B cell (primary cell): ENCODE measurements at regions of chr16 and their contacts with region 1.

Region 1: GRCh38 chr16:85305996-85306792 is 193.9 kb upstream of the CIBAR2 start:
- DNase-seq: peak; percentile 91
- ATAC-seq: peak; percentile 71
- H3K4me3 ChIP-seq: peak overlapping the region in 1 of 5 experiments; percentile 22
- H3K4me3 Mint-ChIP-seq: peak overlapping the region; percentile 61
- H3K27ac ChIP-seq: peak overlapping the region; percentile 51
- H3K27ac Mint-ChIP-seq: peak overlapping the region; percentile 91
- H3K4me1 ChIP-seq: peaks cover 77 to 84% of the 10 kb centered on the region in 2 donors
- H3K4me1 Mint-ChIP-seq: peaks cover 59% of the 10 kb centered on the region
- H3K27me3 ChIP-seq: peaks cover 0 to 5% (median 0%) of the 10 kb centered on the region in 4 experiments
- H3K27me3 Mint-ChIP-seq: no peaks in the 10 kb centered on the region
- CTCF ChIP-seq: no peak

Region 2: DNA sequence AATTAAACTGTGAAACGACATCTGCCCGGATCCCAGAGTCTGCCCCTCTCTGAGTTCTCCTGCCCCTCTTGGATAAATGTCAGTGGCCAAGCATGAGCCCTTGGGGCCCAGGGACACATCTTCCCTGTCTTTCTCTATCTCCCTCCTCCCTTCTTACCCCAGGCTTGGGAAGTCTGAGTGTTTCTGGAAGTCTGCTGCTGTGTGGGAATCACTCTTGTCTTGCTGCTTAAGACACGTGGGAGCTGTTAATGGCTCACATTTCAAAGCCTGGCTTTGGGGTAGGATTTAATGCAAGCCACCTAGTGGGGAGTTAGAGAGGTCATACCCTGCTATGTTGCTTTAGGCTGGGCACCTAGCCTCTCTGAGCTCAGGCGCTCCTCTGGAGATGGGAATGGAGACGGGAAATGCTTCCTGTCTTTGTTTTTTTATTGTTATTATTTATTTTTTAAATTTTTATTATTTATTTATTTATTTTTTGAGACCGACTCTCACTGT is 24.5 kb after region 1 on chr16:
- CTCF ChIA-PET with region 1: interaction called, 39 read pairs
- POLR2A ChIA-PET with region 1: no interaction called
- intact Hi-C with region 1: loop called (anchors 1 kb)
- DNase-seq: peak; percentile 65
- ATAC-seq: peak; percentile 56
- H3K4me3 ChIP-seq: no peak overlapping the region
- H3K4me3 Mint-ChIP-seq: no peak overlapping the region
- H3K27ac ChIP-seq: no peak overlapping the region
- H3K27ac Mint-ChIP-seq: peak overlapping the region; percentile 3
- H3K4me1 ChIP-seq: peaks cover 33 to 43% of the 10 kb centered on the region in 2 donors
- H3K4me1 Mint-ChIP-seq: peaks cover 31% of the 10 kb centered on the region
- H3K27me3 ChIP-seq: peaks cover 0 to 67% (median 26%) of the 10 kb centered on the region in 4 experiments
- H3K27me3 Mint-ChIP-seq: peaks cover 47% of the 10 kb centered on the region
- CTCF ChIP-seq: peak; percentile 54

Region 3: DNA sequence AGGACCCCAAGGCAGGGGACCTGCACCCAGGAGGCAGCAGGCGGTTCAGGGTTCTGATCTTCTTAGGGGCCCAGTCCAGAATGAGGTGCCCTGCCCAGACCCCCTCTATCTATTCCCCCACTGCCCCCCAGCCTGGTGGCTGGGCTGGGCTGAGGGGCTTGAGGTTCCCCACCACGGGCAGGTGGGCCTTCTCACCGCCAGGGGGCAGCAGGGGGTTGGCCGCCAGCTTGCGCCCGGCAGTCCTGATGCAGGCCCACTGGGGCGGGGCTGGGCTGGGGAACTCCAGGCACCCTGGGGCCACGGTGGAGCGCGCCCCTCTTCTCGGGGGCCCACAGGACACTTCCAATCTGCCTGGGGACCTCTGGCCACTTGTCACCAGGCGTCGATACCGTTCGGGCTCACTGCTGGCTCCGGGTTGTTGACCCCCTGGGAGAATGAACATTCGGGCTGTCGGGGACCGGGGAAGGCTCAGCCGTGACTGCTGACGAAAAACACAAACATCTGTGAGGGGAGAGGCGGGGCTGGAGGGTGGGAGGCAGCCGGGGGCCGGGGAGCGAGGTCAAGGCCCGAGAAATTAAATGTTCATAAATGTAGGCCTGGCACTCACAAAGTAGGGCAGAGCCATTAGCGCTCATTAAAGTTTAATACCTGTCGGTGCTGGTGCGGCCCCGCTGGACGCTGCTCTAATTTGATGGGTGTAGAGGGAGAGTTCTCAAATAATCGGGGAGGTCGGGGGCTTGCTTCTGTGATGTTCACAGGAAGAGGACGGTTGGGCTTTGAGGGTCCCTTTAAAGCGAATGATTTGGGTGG is 87.7 kb after region 1 on chr16:
- CTCF ChIA-PET with region 1: interaction called, 4 read pairs
- POLR2A ChIA-PET with region 1: no interaction called
- intact Hi-C with region 1: loop called (anchors 10 kb)
- DNase-seq: peak; percentile 77
- ATAC-seq: peak; percentile 73
- H3K4me3 ChIP-seq: no peak overlapping the region
- H3K4me3 Mint-ChIP-seq: no peak overlapping the region
- H3K27ac ChIP-seq: no peak overlapping the region
- H3K27ac Mint-ChIP-seq: no peak overlapping the region
- H3K4me1 ChIP-seq: no peaks in the 10 kb centered on the region
- H3K4me1 Mint-ChIP-seq: no peaks in the 10 kb centered on the region
- H3K27me3 ChIP-seq: peaks cover 0 to 3% (median under 1%) of the 10 kb centered on the region in 4 experiments
- H3K27me3 Mint-ChIP-seq: peaks cover 24% of the 10 kb centered on the region
- CTCF ChIP-seq: peak; percentile 87

Region 4: DNA sequence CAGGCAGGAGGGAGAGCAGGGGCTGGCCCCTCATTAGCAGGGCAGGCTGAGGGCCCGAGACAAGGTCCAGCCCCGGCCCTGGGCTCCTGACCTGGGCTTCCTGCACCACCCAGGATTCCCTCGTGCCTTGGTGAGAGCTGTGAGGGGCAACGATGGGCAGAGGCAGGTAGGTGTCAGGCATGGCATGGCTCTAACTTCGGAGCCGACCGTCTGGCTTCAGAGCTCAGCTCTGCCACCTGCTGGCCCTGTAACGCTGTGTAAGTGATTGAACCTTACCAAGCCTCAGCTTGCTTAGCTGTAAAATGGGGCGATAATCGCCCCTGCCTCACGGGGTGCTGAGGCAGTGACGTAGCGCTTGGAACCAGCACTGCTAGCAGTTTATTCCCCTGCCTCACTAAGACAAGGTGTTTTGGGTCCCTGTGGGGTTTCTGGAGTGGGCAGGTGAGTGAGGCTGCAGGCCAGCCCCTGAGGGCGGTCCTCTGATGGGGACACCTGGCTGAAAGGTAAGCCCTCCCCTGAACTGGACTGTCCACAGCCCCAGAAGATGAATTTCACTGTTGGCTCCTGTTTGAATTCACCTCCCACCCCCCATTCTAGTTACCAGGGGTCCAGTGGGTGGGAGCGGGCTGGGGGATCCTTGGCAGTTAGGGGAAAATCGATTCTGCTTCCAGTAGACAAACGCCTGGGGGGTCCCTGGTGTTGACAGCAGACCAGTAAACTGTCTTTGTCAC is 122.1 kb after region 1 on chr16:
- CTCF ChIA-PET with region 1: interaction called, 15 read pairs
- POLR2A ChIA-PET with region 1: no interaction called
- intact Hi-C with region 1: loop called (anchors 1 kb)
- DNase-seq: peak; percentile 62
- ATAC-seq: peak; percentile 76
- H3K4me3 ChIP-seq: no peak overlapping the region
- H3K4me3 Mint-ChIP-seq: no peak overlapping the region
- H3K27ac ChIP-seq: no peak overlapping the region
- H3K27ac Mint-ChIP-seq: no peak overlapping the region
- H3K4me1 ChIP-seq: no peaks in the 10 kb centered on the region
- H3K4me1 Mint-ChIP-seq: no peaks in the 10 kb centered on the region
- H3K27me3 ChIP-seq: peaks cover 0 to 8% (median 0%) of the 10 kb centered on the region in 4 experiments
- H3K27me3 Mint-ChIP-seq: peaks cover 24% of the 10 kb centered on the region
- CTCF ChIP-seq: peak; percentile 69